ENCODE measurements at regions of chr11 and their contacts with region 1.

Region 1: DNA sequence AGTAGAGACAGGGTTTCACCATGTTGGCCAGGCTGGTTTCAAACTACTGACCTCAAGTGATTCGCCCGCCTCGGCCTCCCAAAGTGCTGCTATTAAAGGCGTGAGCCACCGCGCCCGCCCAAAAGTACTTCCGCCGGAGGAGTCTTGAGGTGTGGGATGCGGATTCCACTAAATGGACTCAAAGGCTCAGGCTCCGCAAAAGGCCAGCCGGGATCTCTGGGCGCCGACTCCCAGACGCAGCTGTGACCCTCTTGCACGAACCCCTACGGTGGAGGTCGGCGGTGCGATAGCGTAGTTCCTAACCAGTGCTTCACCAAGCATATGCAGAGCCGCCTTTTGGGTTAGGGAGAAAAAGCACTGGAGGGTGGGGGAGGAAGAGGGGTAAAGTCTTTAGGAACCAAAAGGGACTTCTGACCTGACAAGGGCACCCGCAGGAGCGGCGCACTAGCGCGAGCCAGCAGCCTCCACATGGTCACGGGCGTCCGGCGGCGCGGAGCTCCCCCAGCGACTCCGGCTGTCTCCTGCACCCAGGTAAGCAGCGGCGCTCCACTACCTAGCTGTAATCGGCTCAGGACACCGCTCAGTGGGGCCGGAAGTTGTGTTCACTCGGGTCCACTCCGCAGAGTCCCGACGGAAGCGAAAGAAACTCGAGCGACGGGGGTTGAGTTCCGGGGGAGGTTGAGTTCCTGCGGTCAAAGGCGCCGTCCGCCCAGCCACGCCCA is at the start of gene MRPL16:
- ATAC-seq: peak; percentile 97 to 99 (median 99)
- H3K4me3 ChIP-seq: peak within 1 kb of the TSS; percentile 63 to 99 (median 76)
- H3K27ac ChIP-seq: peak within 1 kb of the TSS; percentile 47 to 62
- H3K4me1 ChIP-seq: peaks cover 5 to 10% of the 10 kb centered on the region in 2 donors
- total RNA-seq, gene MRPL16: 16.5 to 70.2 (median 29.9) TPM

Region 2: GRCh38 chr11:59545179-59546020 is 264.9 kb before region 1 on chr11:
- in situ Hi-C with region 1: loop called in 2 of 9 experiments (anchors 25 kb)
- ATAC-seq: no peak
- H3K4me3 ChIP-seq: no peak overlapping the region
- H3K27ac ChIP-seq: no peak overlapping the region
- H3K4me1 ChIP-seq: peaks cover 0 to 8% of the 10 kb centered on the region in 2 donors

Region 3: DNA sequence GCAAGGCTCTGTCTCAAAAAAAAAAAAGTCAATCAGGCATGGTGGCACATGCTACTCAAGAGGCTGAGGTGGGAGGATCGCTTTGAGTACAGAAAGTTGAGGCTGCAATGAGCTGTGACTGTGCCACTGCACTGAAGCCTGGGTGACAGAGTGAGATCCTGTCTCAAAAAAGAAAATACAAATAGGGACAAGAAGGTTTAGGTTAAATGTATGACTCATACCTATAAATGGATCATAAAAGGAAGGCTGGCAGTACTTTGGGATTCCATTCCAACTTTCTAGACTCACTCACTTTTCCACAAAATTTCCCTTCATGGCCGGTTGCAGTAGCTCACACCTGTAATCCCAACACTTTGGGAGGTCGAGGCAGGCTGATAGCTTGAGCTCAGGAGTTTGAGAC is 169.2 kb before region 1 on chr11:
- in situ Hi-C with region 1: no loop called
- ATAC-seq: no peak
- H3K4me3 ChIP-seq: no peak overlapping the region
- H3K27ac ChIP-seq: no peak overlapping the region
- H3K4me1 ChIP-seq: no peaks in the 10 kb centered on the region

Region 4: DNA sequence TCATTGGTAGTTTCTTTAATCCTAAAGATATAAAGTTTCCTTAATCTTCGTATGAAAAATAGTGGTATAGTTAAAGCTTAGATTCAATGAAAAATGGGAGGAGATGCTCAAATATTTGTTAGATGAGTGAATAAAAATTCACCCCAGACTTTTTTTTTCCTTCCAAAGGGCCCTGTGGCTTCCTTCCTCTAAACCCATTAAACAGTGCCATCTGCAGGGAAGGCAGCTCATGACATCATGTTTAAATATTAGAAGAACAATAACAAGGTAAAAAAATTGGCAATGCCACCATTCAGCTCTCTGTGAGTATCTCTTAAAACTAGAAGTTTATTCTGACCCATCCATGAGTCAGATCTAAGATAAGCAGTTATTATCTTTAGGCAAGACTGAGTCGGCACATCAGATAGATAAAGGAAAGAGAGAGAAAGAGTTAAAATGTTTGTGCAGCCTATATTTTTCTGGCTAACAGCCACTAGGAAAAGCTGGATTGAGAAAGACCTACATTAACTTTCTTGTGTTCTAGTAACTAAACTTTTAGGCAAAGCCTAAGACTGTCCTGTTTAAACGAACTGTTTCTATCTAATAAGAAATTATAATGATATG is 108.7 kb after region 1 on chr11:
- in situ Hi-C with region 1: loop called in 1 of 9 experiments (anchors 25 kb)
- ATAC-seq: peak in 3 of 8 experiments; percentile 48 to 68 (median 58)
- H3K4me3 ChIP-seq: no peak overlapping the region
- H3K27ac ChIP-seq: no peak overlapping the region
- H3K4me1 ChIP-seq: no peaks in the 10 kb centered on the region

Region 5: GRCh38 chr11:60130496-60130895 is 320.1 kb after region 1 on chr11:
- in situ Hi-C with region 1: loop called in 2 of 9 experiments (anchors 25 kb)
- ATAC-seq: peak; percentile 53 to 89 (median 70)
- H3K4me3 ChIP-seq: no peak overlapping the region
- H3K27ac ChIP-seq: no peak overlapping the region
- H3K4me1 ChIP-seq: no peaks in the 10 kb centered on the region